Mammary epithelial cell (primary cell): ENCODE measurements at regions of chr3 and their contacts with region 1.

Region 1: DNA sequence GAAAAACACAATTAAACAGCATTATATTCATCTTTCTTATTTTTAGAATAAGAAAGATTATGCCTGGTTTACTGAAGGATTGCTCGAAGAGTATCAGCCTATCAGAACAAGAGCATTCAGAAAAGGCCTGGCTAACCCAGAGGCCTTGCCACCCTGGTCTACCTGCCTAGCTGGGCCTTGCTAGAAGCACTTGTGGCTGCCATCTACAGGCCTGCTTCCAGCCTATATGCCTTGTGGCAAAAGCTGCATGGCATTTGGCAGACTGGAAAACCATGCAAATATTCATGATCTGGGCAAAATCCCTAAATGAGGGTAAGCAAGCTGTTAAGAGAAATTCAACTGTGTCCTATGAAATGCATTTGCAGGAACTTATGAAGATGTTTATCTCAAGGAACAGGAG is 9.3 kb upstream of the ATP13A4 start:
- DNase-seq: peak; percentile 10
- H3K4me3 ChIP-seq: no peak overlapping the region
- H3K27ac ChIP-seq: no peak overlapping the region
- H3K4me1 ChIP-seq: no peaks in the 10 kb centered on the region
- H3K27me3 ChIP-seq: no peaks in the 10 kb centered on the region
- CTCF ChIP-seq: peak; percentile 38 to 65

Region 2: GRCh38 chr3:193465992-193466608 is 97.9 kb before region 1 on chr3:
- CTCF ChIA-PET with region 1: no interaction called
- dilution Hi-C with region 1: no loop called
- in situ Hi-C with region 1: no loop called
- intact Hi-C with region 1: loop called (anchors 1 kb)
- DNase-seq: no peak
- H3K4me3 ChIP-seq: no peak overlapping the region
- H3K27ac ChIP-seq: no peak overlapping the region
- H3K4me1 ChIP-seq: no peaks in the 10 kb centered on the region
- H3K27me3 ChIP-seq: peaks cover 4% of the 10 kb centered on the region
- CTCF ChIP-seq: no peak

Region 3: DNA sequence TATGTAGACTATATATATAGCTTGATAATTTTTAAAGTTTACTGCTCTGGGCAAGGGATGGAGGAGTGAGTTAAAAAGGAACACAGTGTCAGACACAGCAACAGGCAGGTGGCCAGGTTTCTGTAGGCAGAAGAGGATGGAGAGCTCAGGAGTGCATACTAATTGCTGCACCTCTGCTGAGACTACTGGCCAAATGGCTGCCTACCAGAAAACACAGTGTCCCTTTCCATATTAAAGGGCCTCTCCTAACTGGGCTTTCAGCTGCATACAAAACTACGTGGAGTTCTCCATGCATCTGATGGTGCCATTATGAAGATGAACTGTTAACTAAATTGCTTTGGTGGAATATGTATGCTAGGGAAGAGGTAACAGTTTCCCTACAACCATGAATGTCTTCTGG is 11.1 kb before region 1 on chr3:
- CTCF ChIA-PET with region 1: no interaction called
- dilution Hi-C with region 1: no loop called
- in situ Hi-C with region 1: no loop called
- intact Hi-C with region 1: no loop called
- DNase-seq: no peak
- H3K4me3 ChIP-seq: no peak overlapping the region
- H3K27ac ChIP-seq: no peak overlapping the region
- H3K4me1 ChIP-seq: no peaks in the 10 kb centered on the region
- H3K27me3 ChIP-seq: peaks cover 8% of the 10 kb centered on the region
- CTCF ChIP-seq: no peak